ENCODE measurements at regions of chr2 and their contacts with region 1.

Region 1: GRCh38 chr2:191501561-191502168 is 176.3 kb upstream of the NABP1 start:
- DNase-seq: no peak
- ATAC-seq: peak; percentile 53
- H3K4me3 ChIP-seq: no peak overlapping the region
- H3K27ac ChIP-seq: peak overlapping the region; percentile 49
- H3K4me1 ChIP-seq: peaks cover 7% of the 10 kb centered on the region
- H3K27me3 ChIP-seq: no peaks in the 10 kb centered on the region
- CTCF ChIP-seq: peak; percentile 69

Region 2: GRCh38 chr2:191165176-191165643 is 336.5 kb before region 1 on chr2:
- intact Hi-C with region 1: loop called (anchors 10 kb)
- DNase-seq: no peak
- ATAC-seq: peak; percentile 85
- H3K4me3 ChIP-seq: no peak overlapping the region
- H3K27ac ChIP-seq: no peak overlapping the region
- H3K4me1 ChIP-seq: peaks cover 32% of the 10 kb centered on the region
- H3K27me3 ChIP-seq: no peaks in the 10 kb centered on the region
- CTCF ChIP-seq: peak; percentile 72

Region 3: DNA sequence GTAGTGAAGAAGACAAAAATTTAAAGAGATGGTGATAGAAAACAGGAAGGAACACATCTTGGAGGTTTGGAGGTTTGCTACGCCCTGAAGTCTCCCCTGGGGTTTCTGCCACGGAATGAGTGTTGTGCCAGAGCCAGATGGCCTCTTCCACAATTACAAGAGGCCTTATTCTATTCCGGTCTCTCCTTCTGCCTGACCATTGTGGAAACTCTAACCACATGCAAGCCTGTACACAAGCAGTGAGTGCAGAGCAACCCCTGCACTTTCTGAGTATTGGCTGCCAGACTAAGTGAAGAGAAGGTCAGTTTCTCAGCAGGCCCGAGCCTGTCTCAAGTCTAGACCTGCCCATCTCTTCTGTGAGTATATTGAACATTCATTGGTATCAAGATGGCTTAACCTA is 279.2 kb before region 1 on chr2:
- intact Hi-C with region 1: loop called (anchors 10 kb)
- DNase-seq: no peak
- ATAC-seq: no peak
- H3K4me3 ChIP-seq: no peak overlapping the region
- H3K27ac ChIP-seq: no peak overlapping the region
- H3K4me1 ChIP-seq: peaks cover 9% of the 10 kb centered on the region
- H3K27me3 ChIP-seq: no peaks in the 10 kb centered on the region
- CTCF ChIP-seq: no peak

Region 4: GRCh38 chr2:191245046-191245868 is 256.4 kb before region 1 on chr2 and contains the start of gene MYO1B:
- intact Hi-C with region 1: no loop called
- DNase-seq: peak; percentile 92
- ATAC-seq: peak; percentile 93
- H3K4me3 ChIP-seq: peak within 1 kb of the TSS; percentile 77
- H3K27ac ChIP-seq: peak within 1 kb of the TSS; percentile 85
- H3K4me1 ChIP-seq: peaks cover 32% of the 10 kb centered on the region
- H3K27me3 ChIP-seq: no peaks in the 10 kb centered on the region
- CTCF ChIP-seq: peak; percentile 48
- total RNA-seq, gene MYO1B: 231 TPM

Measured in upper lobe of right lung (tissue), 1 donor.